Endothelial cell of umbilical vein (primary cell): ENCODE measurements at regions of chr19 and their contacts with region 1.

Region 1: DNA sequence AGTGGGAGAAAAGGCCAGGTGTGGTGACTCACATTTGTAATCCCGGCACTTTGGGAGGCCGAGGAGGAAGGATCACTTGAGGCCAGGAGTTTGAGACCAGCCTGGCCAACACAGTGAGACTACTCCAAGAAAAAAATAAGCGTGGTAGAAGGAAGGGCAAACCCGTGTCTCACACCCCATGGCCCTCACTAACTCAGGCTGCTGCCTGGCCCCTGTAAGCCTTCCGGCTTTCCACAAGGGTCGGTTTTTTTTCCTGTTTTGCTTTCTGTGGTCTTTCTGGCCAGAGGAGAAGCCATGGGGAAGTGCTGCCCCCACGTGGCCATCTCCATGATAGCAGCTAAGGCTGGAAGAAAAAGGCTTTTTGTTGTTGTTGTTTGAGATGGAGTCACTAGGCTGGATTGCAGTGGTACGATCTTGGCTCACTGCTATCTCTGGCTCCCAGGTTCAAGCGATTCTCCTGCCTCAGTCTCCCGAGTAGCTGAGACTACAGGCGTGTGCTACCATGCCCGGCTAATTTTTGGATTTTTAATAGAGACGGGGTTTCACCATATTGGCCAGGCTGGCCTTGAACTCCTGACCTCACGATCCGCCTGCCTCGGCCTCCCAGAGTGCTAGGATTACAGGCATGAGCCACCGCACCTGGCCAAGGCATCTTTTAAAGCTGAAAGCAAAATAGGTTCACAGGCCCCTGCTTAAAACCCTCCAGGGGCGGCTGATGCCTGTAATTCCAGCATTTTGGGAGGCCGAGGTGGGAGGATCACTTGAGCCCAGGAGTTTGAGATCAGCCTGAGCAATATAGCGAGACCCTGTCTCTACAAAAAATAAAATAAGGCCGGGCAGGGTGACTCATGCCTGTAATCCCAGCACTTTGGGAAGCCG is 7.5 kb upstream of the ARHGEF18 start:
- DNase-seq: peak; percentile 86
- H3K4me3 ChIP-seq: no peak overlapping the region
- H3K27ac ChIP-seq: no peak overlapping the region
- H3K4me1 ChIP-seq: no peaks in the 10 kb centered on the region
- H3K27me3 ChIP-seq: no peaks in the 10 kb centered on the region
- CTCF ChIP-seq: peak; percentile 78 to 92
- POLR2A ChIP-seq: no peak

Region 2: DNA sequence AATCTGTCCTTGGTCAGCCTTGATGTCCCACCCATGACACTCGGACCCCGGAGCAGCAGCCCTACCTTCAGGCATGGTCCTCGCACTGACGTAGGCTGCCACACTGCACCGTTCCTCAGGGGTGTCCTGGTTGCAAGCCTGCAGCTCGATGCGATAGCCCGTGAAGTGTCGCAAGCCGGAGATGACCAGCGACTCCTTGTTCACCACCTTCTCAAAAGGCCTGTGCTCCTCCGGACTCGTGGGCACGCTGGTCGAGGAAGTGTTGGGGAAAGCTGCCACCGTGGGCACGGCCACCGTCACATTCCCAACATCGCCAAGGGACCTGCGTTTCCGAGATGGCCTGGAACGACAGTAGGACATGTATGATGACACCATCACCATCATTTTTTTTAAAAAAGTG is 198.4 kb before region 1 on chr19:
- CTCF ChIA-PET with region 1: interaction called, 42 read pairs
- POLR2A ChIA-PET with region 1: no interaction called
- dilution Hi-C with region 1: no loop called
- intact Hi-C with region 1: no loop called
- DNase-seq: no peak
- H3K4me3 ChIP-seq: no peak overlapping the region
- H3K27ac ChIP-seq: no peak overlapping the region
- H3K4me1 ChIP-seq: no peaks in the 10 kb centered on the region
- H3K27me3 ChIP-seq: no peaks in the 10 kb centered on the region
- CTCF ChIP-seq: no peak
- POLR2A ChIP-seq: no peak